Heart left ventricle (tissue), 16 donors: ENCODE measurements at regions of chr12 and their contacts with region 1.

Region 1: DNA sequence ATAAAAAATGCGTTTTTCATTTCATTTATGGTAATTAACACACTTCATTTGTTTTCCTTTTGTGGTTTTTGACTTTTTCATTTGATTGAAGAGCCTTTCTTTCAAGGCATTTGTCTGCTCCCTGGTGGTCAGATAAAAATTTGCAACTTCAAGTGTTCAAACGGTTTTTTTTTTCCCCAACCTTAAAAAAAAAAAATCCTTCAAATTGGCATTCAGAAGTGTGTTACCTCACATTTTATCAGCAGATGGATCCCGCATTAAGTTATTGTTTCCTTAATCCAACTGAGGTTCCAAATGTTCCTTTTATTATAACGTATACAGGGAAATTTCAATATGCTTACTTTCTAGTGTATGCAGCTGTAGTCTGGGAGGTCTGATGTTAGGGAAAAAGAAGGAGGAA is 47.2 kb downstream of the MYF5 start:
- DNase-seq: no peak
- ATAC-seq: no peak
- H3K4me3 ChIP-seq: no peak overlapping the region
- H3K27ac ChIP-seq: no peak overlapping the region
- H3K4me1 ChIP-seq: no peaks in the 10 kb centered on the region
- H3K27me3 ChIP-seq: no peaks in the 10 kb centered on the region
- CTCF ChIP-seq: peak; percentile 39 to 68 (median 53)
- POLR2A ChIP-seq: no peak

Region 2: DNA sequence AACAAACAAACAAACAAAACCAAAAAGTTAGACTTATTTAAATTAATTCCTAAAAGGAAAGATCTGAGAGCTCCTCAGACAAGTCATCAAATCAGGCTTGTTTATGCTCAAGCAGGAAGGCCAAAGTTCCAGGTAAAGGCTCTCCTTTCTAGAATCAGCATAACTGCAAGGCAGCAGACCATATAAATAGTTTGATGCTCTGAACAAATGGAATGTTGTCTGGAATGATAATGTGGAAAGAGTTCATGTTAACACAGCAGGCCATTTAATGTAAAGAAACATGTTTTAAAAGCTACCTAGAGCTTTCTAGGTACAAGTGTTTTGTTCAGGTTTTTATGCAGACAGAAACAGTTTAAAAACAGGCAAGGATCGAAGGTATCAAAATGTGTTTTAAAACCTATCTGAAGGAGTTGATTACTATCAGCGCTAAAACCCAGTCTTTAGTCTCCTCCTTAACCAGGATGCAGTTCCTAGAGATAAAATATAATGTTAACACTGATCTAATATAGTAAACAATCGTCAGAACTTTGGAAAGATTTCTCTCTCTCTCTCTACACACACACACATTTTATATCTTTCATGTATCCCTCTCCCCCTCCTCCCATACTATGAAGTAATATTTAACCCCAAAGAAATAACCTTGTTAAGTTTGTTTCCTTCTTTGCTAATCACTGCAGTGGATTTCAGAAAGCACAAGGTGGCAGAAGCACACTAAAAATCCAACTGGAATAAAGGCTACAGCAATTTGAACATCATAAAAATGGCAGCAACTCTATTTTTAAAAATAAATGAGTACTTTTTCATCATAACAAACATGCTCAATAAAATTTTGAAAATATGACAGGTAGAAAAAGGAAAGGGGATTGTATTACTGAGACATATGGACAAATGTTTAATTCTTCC is 1208.6 kb before region 1 on chr12:
- intact Hi-C with region 1: loop called in 1 of 10 experiments (anchors 10 kb)
- DNase-seq: no peak
- ATAC-seq: peak in 1 of 4 donors; percentile 45
- H3K4me3 ChIP-seq: no peak overlapping the region
- H3K27ac ChIP-seq: peak overlapping the region in 1 of 12 donors; percentile 38
- H3K4me1 ChIP-seq: peaks cover 0 to 45% (median 7%) of the 10 kb centered on the region in 12 donors
- H3K27me3 ChIP-seq: no peaks in the 10 kb centered on the region
- CTCF ChIP-seq: peak; percentile 31 to 80 (median 62)
- POLR2A ChIP-seq: no peak

Region 3: GRCh38 chr12:80195074-80195726 is 568.7 kb before region 1 on chr12:
- intact Hi-C with region 1: loop called in 1 of 10 experiments (anchors 10 kb)
- DNase-seq: peak in 1 of 5 donors; percentile 24
- ATAC-seq: peak in 2 of 4 donors; percentile 52 to 67
- H3K4me3 ChIP-seq: no peak overlapping the region
- H3K27ac ChIP-seq: peak overlapping the region in 1 of 12 donors; percentile 5
- H3K4me1 ChIP-seq: peaks cover 0 to 5% (median 0%) of the 10 kb centered on the region in 12 donors
- H3K27me3 ChIP-seq: no peaks in the 10 kb centered on the region
- CTCF ChIP-seq: peak; percentile 31 to 71 (median 51)
- POLR2A ChIP-seq: no peak

Region 4: GRCh38 chr12:80412369-80412953 is 351.4 kb before region 1 on chr12:
- intact Hi-C with region 1: loop called in 9 of 10 experiments (anchors 2 to 5 kb)
- DNase-seq: no peak
- ATAC-seq: peak in 1 of 4 donors; percentile 58
- H3K4me3 ChIP-seq: no peak overlapping the region
- H3K27ac ChIP-seq: no peak overlapping the region
- H3K4me1 ChIP-seq: no peaks in the 10 kb centered on the region
- H3K27me3 ChIP-seq: no peaks in the 10 kb centered on the region
- CTCF ChIP-seq: peak; percentile 57 to 80 (median 74)
- POLR2A ChIP-seq: no peak

Region 5: DNA sequence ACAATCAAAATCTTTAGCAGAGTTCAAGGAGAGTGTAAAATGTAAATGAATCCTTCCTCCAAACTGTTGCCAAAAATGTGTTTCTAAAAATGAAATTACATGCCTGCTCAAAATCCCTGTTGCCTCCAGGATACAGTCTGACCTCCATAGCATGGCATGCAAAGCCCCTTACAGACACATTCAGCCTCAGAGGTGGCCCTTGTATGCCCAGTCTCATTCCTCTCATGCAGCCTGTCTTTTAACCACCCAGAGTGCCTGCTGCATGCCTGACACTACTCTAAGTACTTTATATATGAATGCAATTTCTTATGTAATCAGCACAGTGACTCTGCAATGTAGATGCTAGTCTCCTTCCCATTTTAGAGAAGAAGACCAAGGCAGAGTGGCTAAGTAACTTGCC is 344.2 kb before region 1 on chr12:
- intact Hi-C with region 1: loop called in 6 of 10 experiments (anchors 5 kb)
- DNase-seq: no peak
- ATAC-seq: no peak
- H3K4me3 ChIP-seq: no peak overlapping the region
- H3K27ac ChIP-seq: no peak overlapping the region
- H3K4me1 ChIP-seq: peaks cover 0 to 2% (median 0%) of the 10 kb centered on the region in 12 donors
- H3K27me3 ChIP-seq: no peaks in the 10 kb centered on the region
- CTCF ChIP-seq: no peak
- POLR2A ChIP-seq: no peak

Region 6: GRCh38 chr12:80472902-80473500 is 290.9 kb before region 1 on chr12:
- intact Hi-C with region 1: loop called in 9 of 10 experiments (anchors 2 to 10 kb)
- DNase-seq: no peak
- ATAC-seq: peak in 1 of 4 donors; percentile 67
- H3K4me3 ChIP-seq: no peak overlapping the region
- H3K27ac ChIP-seq: no peak overlapping the region
- H3K4me1 ChIP-seq: no peaks in the 10 kb centered on the region
- H3K27me3 ChIP-seq: no peaks in the 10 kb centered on the region
- CTCF ChIP-seq: peak in 8 of 12 donors; percentile 26 to 51 (median 32)
- POLR2A ChIP-seq: no peak

Region 7: DNA sequence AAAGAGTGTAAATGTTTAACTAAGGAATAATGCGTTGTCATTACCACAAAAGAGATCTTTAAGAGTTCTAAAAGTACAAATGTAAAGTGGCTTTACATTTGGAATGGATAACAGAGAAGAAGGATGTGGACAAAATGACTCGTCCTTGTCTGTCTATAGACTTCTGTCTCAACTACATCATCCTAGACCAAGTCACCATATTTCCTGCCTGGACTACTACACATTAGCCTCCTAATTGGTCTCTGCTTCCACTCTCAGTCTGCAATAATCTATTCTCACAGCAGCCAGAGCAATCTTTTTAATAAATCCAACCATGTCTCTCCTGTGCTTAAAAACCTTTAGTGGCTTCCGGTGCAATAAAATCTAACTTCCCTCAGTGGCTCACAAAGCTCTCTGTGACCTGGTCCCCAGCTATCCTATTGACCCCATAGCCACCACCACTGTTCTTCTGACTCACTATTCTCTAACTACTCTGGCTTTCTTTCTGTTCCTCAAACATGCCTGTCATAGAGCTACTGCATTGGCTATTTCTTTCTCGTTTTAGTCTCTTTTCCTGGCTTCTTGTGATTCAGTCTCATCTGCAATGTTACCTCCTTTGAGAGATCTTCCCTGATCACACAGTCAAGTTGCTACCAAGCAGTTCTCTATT is 43.9 kb after region 1 on chr12:
- intact Hi-C with region 1: no loop called
- DNase-seq: no peak
- ATAC-seq: no peak
- H3K4me3 ChIP-seq: no peak overlapping the region
- H3K27ac ChIP-seq: no peak overlapping the region
- H3K4me1 ChIP-seq: peaks cover 0 to 6% (median 0%) of the 10 kb centered on the region in 12 donors
- H3K27me3 ChIP-seq: no peaks in the 10 kb centered on the region
- CTCF ChIP-seq: no peak
- POLR2A ChIP-seq: no peak

Region 8: GRCh38 chr12:80877721-80878265 is 113.9 kb after region 1 on chr12:
- intact Hi-C with region 1: no loop called
- DNase-seq: no peak
- ATAC-seq: peak; percentile 83 to 92 (median 90)
- H3K4me3 ChIP-seq: peak overlapping the region in 8 of 12 donors; percentile 3 to 36 (median 23)
- H3K27ac ChIP-seq: peak overlapping the region; percentile 68 to 88 (median 81)
- H3K4me1 ChIP-seq: peaks cover 0 to 33% (median 12%) of the 10 kb centered on the region in 12 donors
- H3K27me3 ChIP-seq: no peaks in the 10 kb centered on the region
- CTCF ChIP-seq: no peak
- POLR2A ChIP-seq: no peak